ENCODE measurements at regions of chr4 and their contacts with region 1.

Region 1: GRCh38 chr4:986879-987623 is at the start of gene IDUA:
- DNase-seq: peak; percentile 82 to 93 (median 89)
- ATAC-seq: peak; percentile 85 to 89
- H3K4me3 Mint-ChIP-seq: peak within 1 kb of the TSS; percentile 83 to 94 (median 90)
- H3K27ac Mint-ChIP-seq: peak within 1 kb of the TSS; percentile 63 to 95 (median 92)
- H3K4me1 Mint-ChIP-seq: peaks cover 5 to 35% (median 20%) of the 10 kb centered on the region in 4 donors
- H3K27me3 Mint-ChIP-seq: no peaks in the 10 kb centered on the region
- polyA plus RNA-seq, gene IDUA: 6.5 to 15.4 (median 9.6) TPM

Region 2: GRCh38 chr4:931960-932712 is 54.9 kb before region 1 on chr4 and contains the starts of genes GAK and TMEM175:
- POLR2A ChIA-PET with region 1: interaction called, 11 read pairs
- DNase-seq: peak; percentile 94 to 98 (median 97)
- ATAC-seq: peak; percentile 92
- H3K4me3 Mint-ChIP-seq: peak within 1 kb of the TSS; percentile 92 to 98 (median 94)
- H3K27ac Mint-ChIP-seq: peak within 1 kb of the TSS; percentile 89 to 99 (median 96)
- H3K4me1 Mint-ChIP-seq: peaks cover 28 to 83% (median 51%) of the 10 kb centered on the region in 4 donors
- H3K27me3 Mint-ChIP-seq: peaks cover 0 to 5% (median 0%) of the 10 kb centered on the region in 5 donors
- polyA plus RNA-seq, gene GAK: 45.0 to 71.0 (median 57.6) TPM
- polyA plus RNA-seq, gene TMEM175: 6.4 to 14.7 (median 11.5) TPM

Region 3: DNA sequence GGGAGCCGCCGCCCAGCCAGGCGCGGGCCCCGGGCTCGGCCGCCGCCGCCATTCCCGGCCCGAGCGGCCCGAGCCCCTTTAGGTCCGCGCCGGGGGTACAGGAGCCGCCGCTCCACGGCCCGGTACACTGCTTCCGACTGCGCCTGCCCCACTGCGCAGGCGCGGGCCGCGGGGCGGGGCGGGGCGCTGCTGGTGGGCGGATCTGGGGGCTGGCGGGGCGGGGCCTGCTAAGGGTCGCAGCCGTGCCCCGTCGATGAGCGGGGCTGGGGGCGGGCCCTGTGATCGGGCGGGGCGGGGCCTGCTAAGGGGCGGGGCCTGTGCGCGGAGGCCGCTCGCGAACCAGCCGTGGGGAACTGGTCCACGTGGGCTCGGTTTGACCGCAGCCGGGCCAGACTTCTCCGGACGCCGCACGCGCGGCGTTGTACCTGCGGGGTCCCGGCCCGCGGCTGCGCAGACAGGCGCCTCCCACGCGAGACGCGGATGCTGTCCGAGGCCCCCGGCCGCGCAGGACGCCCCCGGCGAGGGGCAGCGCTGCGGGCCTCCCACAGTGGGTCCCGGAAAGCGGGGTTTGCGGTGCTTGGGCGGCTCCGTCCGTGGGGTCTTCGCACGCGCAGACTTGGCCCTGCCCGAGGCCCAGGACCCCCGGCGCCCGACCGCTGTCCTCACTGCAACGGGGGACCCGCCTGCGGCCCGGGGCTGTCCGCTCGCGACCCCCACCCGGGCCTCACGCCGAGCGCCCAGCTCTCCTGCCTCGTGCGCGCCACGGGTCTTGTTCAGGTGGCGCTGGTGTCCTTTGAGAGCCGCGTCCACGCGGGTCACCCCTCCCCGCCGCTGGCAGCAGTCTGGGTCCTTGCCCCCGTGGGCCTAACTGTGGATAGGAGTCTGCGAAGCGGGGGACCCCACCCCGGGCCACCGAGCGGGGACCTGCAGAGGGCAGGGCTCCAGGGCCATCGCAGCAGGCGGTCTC is 13.3 kb before region 1 on chr4 and contains the start of gene DGKQ:
- POLR2A ChIA-PET with region 1: interaction called, 16 read pairs
- DNase-seq: peak; percentile 73 to 93 (median 88)
- ATAC-seq: peak; percentile 79 to 80
- H3K4me3 Mint-ChIP-seq: peak within 1 kb of the TSS in 9 of 10 donors; percentile 33 to 71 (median 57)
- H3K27ac Mint-ChIP-seq: peak within 1 kb of the TSS in 3 of 10 donors; percentile 33 to 44 (median 43)
- H3K4me1 Mint-ChIP-seq: peaks cover 6 to 24% (median 19%) of the 10 kb centered on the region in 4 donors
- H3K27me3 Mint-ChIP-seq: no peaks in the 10 kb centered on the region
- polyA plus RNA-seq, gene DGKQ: 2.2 to 17.3 (median 10.0) TPM

Region 4: DNA sequence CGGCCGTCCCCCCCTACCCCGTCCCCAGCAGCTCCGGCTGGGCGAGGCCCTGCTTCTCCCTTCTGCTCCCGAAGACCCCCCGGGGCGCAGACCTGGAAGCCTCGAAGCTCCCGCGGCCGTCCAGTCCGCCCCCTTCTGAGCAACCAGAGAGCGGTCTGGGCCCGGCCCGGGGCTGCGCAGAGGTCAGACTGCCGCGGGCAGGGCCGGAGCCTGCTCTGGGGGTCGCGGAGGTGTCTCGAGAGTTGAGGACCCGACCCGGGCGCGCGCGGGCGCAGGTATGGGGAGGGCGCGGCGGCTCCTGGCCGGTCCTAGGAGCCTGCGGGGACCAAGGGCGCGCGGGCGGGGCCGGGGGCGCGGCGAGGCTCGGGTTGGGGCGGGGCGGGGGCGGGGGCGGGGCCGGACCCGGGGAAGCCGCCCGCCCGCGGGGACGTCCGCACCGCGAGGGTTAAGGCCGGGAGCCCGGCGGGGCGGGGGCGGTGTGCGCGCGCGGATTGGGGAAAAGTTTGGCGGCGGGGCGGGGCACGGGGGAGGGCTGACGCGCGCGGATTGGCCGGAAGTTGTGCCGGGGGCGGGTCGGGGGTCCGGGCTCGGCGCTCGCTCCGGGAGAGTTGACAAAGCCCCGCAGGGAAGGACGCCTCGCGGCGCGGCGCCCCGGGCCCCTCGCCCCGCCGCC is 24.1 kb after region 1 on chr4 and contains the start of gene FGFRL1:
- POLR2A ChIA-PET with region 1: interaction called, 12 read pairs
- DNase-seq: peak; percentile 75 to 94 (median 84)
- ATAC-seq: peak; percentile 55 to 67
- H3K4me3 Mint-ChIP-seq: peak within 1 kb of the TSS; percentile 83 to 96 (median 92)
- H3K27ac Mint-ChIP-seq: peak within 1 kb of the TSS; percentile 81 to 97 (median 94)
- H3K4me1 Mint-ChIP-seq: peaks cover 9 to 20% (median 17%) of the 10 kb centered on the region in 4 donors
- H3K27me3 Mint-ChIP-seq: peaks cover 8 to 33% (median 23%) of the 10 kb centered on the region in 5 donors
- polyA plus RNA-seq, gene FGFRL1: 0.65 to 1.2 (median 0.73) TPM

Region 5: GRCh38 chr4:1026115-1026514 is 39.1 kb after region 1 on chr4:
- POLR2A ChIA-PET with region 1: no interaction called
- DNase-seq: no peak
- ATAC-seq: peak; percentile 53 to 67
- H3K4me3 Mint-ChIP-seq: peak overlapping the region in 1 of 10 donors; percentile 4
- H3K27ac Mint-ChIP-seq: peak overlapping the region in 2 of 10 donors; percentile 15 to 25
- H3K4me1 Mint-ChIP-seq: peaks cover 0 to 8% (median 2%) of the 10 kb centered on the region in 4 donors
- H3K27me3 Mint-ChIP-seq: no peaks in the 10 kb centered on the region